Endothelial cell of umbilical vein (primary cell): ENCODE measurements at regions of chr11 and their contacts with region 1.

Region 1: GRCh38 chr11:36131721-36132397 is 157.4 kb downstream of the COMMD9 start:
- DNase-seq: peak; percentile 71
- H3K4me3 ChIP-seq: no peak overlapping the region
- H3K27ac ChIP-seq: no peak overlapping the region
- H3K4me1 ChIP-seq: peaks cover 9% of the 10 kb centered on the region
- H3K27me3 ChIP-seq: no peaks in the 10 kb centered on the region
- CTCF ChIP-seq: peak; percentile 65 to 80
- POLR2A ChIP-seq: no peak

Region 2: GRCh38 chr11:35485656-35486322 is 646.1 kb before region 1 on chr11:
- CTCF ChIA-PET with region 1: interaction called, 3 read pairs
- POLR2A ChIA-PET with region 1: no interaction called
- dilution Hi-C with region 1: no loop called
- intact Hi-C with region 1: loop called (anchors 5 kb)
- DNase-seq: peak; percentile 79
- H3K4me3 ChIP-seq: no peak overlapping the region
- H3K27ac ChIP-seq: no peak overlapping the region
- H3K4me1 ChIP-seq: no peaks in the 10 kb centered on the region
- H3K27me3 ChIP-seq: peaks cover 8 to 10% of the 10 kb centered on the region in 2 experiments
- CTCF ChIP-seq: peak; percentile 85 to 92
- POLR2A ChIP-seq: no peak

Region 3: DNA sequence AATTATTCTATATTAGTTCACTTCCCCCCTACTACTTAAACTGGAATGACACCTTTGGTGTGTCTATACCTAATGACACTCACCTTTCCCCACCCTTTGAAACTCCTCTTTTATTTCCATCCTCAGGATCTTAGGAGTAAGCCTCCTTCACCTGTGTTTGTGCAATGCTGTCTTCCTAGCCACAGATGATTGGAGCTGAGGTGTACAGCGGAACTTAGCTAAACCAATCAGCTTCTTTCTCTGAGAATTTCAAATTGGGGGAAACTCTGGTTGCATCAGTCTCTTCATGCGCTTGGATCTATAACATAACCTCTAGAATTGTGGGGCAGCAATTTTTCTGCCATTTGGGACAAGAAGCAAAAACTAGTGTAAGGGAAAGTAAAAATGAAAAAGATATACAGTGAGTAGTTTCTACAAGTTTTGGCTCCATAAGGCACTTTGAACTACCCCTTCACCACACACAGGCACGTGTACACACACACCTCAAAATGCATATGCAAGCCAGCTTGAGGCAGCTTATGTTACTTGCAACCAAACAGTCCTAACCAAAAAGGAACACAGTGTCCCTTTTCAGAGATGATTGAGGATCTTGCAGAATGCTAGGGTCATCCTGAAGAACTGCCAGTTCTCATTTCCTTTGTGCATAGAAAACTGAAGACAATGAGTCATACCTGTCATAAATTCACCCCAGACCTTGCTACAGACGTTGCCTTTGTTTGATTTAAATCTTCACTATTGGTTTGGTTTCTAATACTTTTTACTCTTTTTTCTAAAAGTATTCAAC is 224.0 kb before region 1 on chr11:
- CTCF ChIA-PET with region 1: interaction called, 3 read pairs
- POLR2A ChIA-PET with region 1: no interaction called
- dilution Hi-C with region 1: no loop called
- intact Hi-C with region 1: loop called (anchors 5 kb)
- DNase-seq: peak; percentile 82
- H3K4me3 ChIP-seq: no peak overlapping the region
- H3K27ac ChIP-seq: peak overlapping the region; percentile 16
- H3K4me1 ChIP-seq: peaks cover 26% of the 10 kb centered on the region
- H3K27me3 ChIP-seq: no peaks in the 10 kb centered on the region
- CTCF ChIP-seq: no peak
- POLR2A ChIP-seq: no peak

Region 4: GRCh38 chr11:36048496-36049247 is 83.2 kb before region 1 on chr11:
- CTCF ChIA-PET with region 1: interaction called, 49 read pairs
- POLR2A ChIA-PET with region 1: no interaction called
- dilution Hi-C with region 1: no loop called
- intact Hi-C with region 1: no loop called
- DNase-seq: no peak
- H3K4me3 ChIP-seq: no peak overlapping the region
- H3K27ac ChIP-seq: no peak overlapping the region
- H3K4me1 ChIP-seq: no peaks in the 10 kb centered on the region
- H3K27me3 ChIP-seq: no peaks in the 10 kb centered on the region
- CTCF ChIP-seq: no peak
- POLR2A ChIP-seq: no peak

Region 5: GRCh38 chr11:36109850-36110606 is 21.8 kb before region 1 on chr11:
- CTCF ChIA-PET with region 1: interaction called, 40 read pairs
- POLR2A ChIA-PET with region 1: no interaction called
- dilution Hi-C with region 1: no loop called
- intact Hi-C with region 1: no loop called
- DNase-seq: no peak
- H3K4me3 ChIP-seq: no peak overlapping the region
- H3K27ac ChIP-seq: no peak overlapping the region
- H3K4me1 ChIP-seq: peaks cover 5% of the 10 kb centered on the region
- H3K27me3 ChIP-seq: no peaks in the 10 kb centered on the region
- CTCF ChIP-seq: no peak
- POLR2A ChIP-seq: no peak

Region 6: GRCh38 chr11:36149538-36150242 is 17.8 kb after region 1 on chr11:
- CTCF ChIA-PET with region 1: interaction called, 23 read pairs
- POLR2A ChIA-PET with region 1: no interaction called
- dilution Hi-C with region 1: no loop called
- intact Hi-C with region 1: loop called (anchors 1 kb)
- DNase-seq: peak; percentile 99
- H3K4me3 ChIP-seq: no peak overlapping the region
- H3K27ac ChIP-seq: peak overlapping the region; percentile 93
- H3K4me1 ChIP-seq: peaks cover 25% of the 10 kb centered on the region
- H3K27me3 ChIP-seq: no peaks in the 10 kb centered on the region
- CTCF ChIP-seq: peak; percentile 43 to 50
- POLR2A ChIP-seq: peak; percentile 64

Region 7: GRCh38 chr11:36265793-36266628 is 134.2 kb after region 1 on chr11:
- CTCF ChIA-PET with region 1: interaction called, 10 read pairs
- POLR2A ChIA-PET with region 1: no interaction called
- dilution Hi-C with region 1: no loop called
- intact Hi-C with region 1: no loop called
- DNase-seq: peak; percentile 40
- H3K4me3 ChIP-seq: no peak overlapping the region
- H3K27ac ChIP-seq: no peak overlapping the region
- H3K4me1 ChIP-seq: no peaks in the 10 kb centered on the region
- H3K27me3 ChIP-seq: peaks cover 0 to 5% of the 10 kb centered on the region in 2 experiments
- CTCF ChIP-seq: peak; percentile 86 to 89
- POLR2A ChIP-seq: no peak